ENCODE measurements at regions of chr21 and their contacts with region 1.

Region 1: GRCh38 chr21:17708522-17709265 is 96.0 kb upstream of the BTG3 start:
- DNase-seq: no peak
- ATAC-seq: no peak
- H3K4me3 Mint-ChIP-seq: no peak overlapping the region
- H3K27ac Mint-ChIP-seq: no peak overlapping the region
- H3K4me1 Mint-ChIP-seq: peaks cover 8% of the 10 kb centered on the region
- H3K27me3 Mint-ChIP-seq: no peaks in the 10 kb centered on the region
- CTCF ChIP-seq: no peak

Region 2: DNA sequence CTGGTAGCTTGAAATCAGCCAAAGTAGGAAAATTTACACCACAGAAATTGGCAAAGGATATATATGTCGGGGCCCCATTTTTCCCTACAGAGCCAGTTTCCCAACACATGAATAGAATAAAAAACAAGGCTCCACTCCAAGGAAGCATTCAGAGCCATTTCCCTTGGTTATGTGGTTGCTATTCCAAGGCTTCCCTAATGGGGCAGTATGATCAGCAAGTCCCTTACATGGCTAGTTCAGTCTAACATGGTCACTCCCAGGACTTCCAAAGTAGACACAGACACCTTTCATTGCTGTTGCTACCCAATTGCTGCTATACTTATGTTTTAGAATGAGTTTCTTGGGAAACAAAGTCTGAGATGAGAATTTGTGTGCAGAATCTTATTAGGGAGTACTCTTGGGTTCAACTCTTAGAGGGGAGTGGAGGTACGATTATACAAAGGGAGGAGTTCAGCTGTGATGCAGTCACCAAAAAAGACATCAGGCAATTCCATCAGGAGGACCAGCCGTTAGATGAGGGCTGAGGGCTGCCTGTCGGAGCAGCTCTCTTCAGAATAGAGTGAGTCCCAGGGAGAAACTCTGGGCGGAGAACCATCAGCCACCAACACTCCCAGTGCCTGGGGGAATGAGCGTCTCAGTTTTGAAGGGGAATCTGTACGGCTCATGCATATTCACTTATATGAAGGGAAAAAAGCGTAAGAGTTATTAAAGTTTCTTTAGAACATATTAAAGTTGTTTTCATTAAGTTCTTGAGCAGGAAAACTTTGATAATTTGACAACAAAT is 17.5 kb after region 1 on chr21:
- CTCF ChIA-PET with region 1: no interaction called
- POLR2A ChIA-PET with region 1: no interaction called
- intact Hi-C with region 1: loop called (anchors 2 kb)
- DNase-seq: no peak
- ATAC-seq: no peak
- H3K4me3 Mint-ChIP-seq: no peak overlapping the region
- H3K27ac Mint-ChIP-seq: no peak overlapping the region
- H3K4me1 Mint-ChIP-seq: no peaks in the 10 kb centered on the region
- H3K27me3 Mint-ChIP-seq: no peaks in the 10 kb centered on the region
- CTCF ChIP-seq: no peak

Measured in activated B cell treated with CpG ODN at 0.5 μM for 24 hours (primary cell).